ENCODE measurements at regions of chr6 and their contacts with region 1.

Region 1: GRCh38 chr6:150068720-150069648 is at the start of gene ULBP3:
- DNase-seq: no peak
- ATAC-seq: peak; percentile 97
- H3K4me3 ChIP-seq: peak within 1 kb of the TSS; percentile 62 to 77
- H3K27ac ChIP-seq: peak within 1 kb of the TSS; percentile 39; the same call in 1 of the 2 replicates
- H3K4me1 ChIP-seq: peaks cover 5% of the 10 kb centered on the region; the same call in 1 of the 2 replicates
- H3K27me3 ChIP-seq: no peaks in the 10 kb centered on the region
- CTCF ChIP-seq: peak; percentile 86
- total RNA-seq, gene ULBP3: 2.4 TPM

Region 2: GRCh38 chr6:150004783-150005717 is 63.9 kb before region 1 on chr6:
- CTCF ChIA-PET with region 1: no interaction called
- POLR2A ChIA-PET with region 1: no interaction called
- in situ Hi-C with region 1: no loop called
- intact Hi-C with region 1: no loop called
- DNase-seq: peak; percentile 62
- ATAC-seq: peak; percentile 98
- H3K4me3 ChIP-seq: peak overlapping the region; percentile 67 to 72
- H3K27ac ChIP-seq: peak overlapping the region; percentile 1; the same call in 1 of the 2 replicates
- H3K4me1 ChIP-seq: peaks cover 8% of the 10 kb centered on the region
- H3K27me3 ChIP-seq: peaks cover 2% of the 10 kb centered on the region
- CTCF ChIP-seq: no peak

Region 3: GRCh38 chr6:150053450-150053849 is 15.5 kb before region 1 on chr6:
- CTCF ChIA-PET with region 1: interaction called, 10 read pairs
- POLR2A ChIA-PET with region 1: no interaction called
- in situ Hi-C with region 1: no loop called
- intact Hi-C with region 1: no loop called
- DNase-seq: no peak
- ATAC-seq: no peak
- H3K4me3 ChIP-seq: no peak overlapping the region
- H3K27ac ChIP-seq: no peak overlapping the region
- H3K4me1 ChIP-seq: no peaks in the 10 kb centered on the region
- H3K27me3 ChIP-seq: peaks cover 16% of the 10 kb centered on the region
- CTCF ChIP-seq: no peak

Region 4: DNA sequence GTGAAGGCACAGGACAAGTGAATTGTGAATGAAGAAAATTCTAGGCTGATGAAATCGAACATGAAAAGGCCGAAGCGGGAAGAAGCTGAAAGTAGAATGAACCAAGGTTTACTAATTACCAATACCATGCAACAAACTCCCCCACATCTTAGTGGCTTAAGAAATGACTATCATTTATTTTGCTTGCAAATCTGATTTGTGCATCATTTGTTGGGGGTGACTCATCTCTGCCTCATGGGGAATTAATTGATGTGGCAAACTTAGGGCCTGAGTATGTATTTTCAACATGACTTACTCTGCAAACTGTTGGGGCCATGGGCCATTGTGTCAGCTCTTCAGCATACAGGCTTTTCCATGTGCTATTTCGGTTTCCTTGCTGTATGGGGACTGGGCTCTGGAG is 100.6 kb after region 1 on chr6:
- CTCF ChIA-PET with region 1: interaction called, 10 read pairs
- POLR2A ChIA-PET with region 1: no interaction called
- in situ Hi-C with region 1: no loop called
- intact Hi-C with region 1: no loop called
- DNase-seq: no peak
- ATAC-seq: no peak
- H3K4me3 ChIP-seq: no peak overlapping the region
- H3K27ac ChIP-seq: no peak overlapping the region
- H3K4me1 ChIP-seq: no peaks in the 10 kb centered on the region
- H3K27me3 ChIP-seq: no peaks in the 10 kb centered on the region
- CTCF ChIP-seq: no peak

Region 5: GRCh38 chr6:150256618-150257272 is 187.8 kb after region 1 on chr6:
- CTCF ChIA-PET with region 1: no interaction called
- POLR2A ChIA-PET with region 1: interaction called, 13 read pairs
- in situ Hi-C with region 1: no loop called
- intact Hi-C with region 1: no loop called
- DNase-seq: no peak
- ATAC-seq: no peak
- H3K4me3 ChIP-seq: no peak overlapping the region
- H3K27ac ChIP-seq: no peak overlapping the region
- H3K4me1 ChIP-seq: no peaks in the 10 kb centered on the region
- H3K27me3 ChIP-seq: peaks cover 7% of the 10 kb centered on the region; the same call in 1 of the 2 replicates
- CTCF ChIP-seq: no peak